ENCODE measurements at regions of chr7 and their contacts with region 1.

Region 1: GRCh38 chr7:134514663-134515062 is 12.7 kb upstream of the AKR1B10 start:
- DNase-seq: peak; percentile 68
- H3K4me3 ChIP-seq: no peak overlapping the region
- H3K27ac ChIP-seq: no peak overlapping the region
- H3K4me1 ChIP-seq: peaks cover 0 to 6% of the 10 kb centered on the region in 2 experiments; a peak in 1 of 4 replicates
- H3K27me3 ChIP-seq: 0 out of 2 replicates have a peak, but pooled peaks cover 16% of the 10 kb centered on the region
- CTCF ChIP-seq: peak; percentile 98
- EP300 ChIP-seq: no peak
- RAD21 ChIP-seq: peak; percentile 66

Region 2: GRCh38 chr7:134197345-134197744 is 317.3 kb before region 1 on chr7:
- CTCF ChIA-PET with region 1: no interaction called
- POLR2A ChIA-PET with region 1: no interaction called
- DNase-seq: no peak
- H3K4me3 ChIP-seq: no peak overlapping the region
- H3K27ac ChIP-seq: no peak overlapping the region
- H3K4me1 ChIP-seq: peaks cover 0 to 10% of the 10 kb centered on the region in 2 experiments; a peak in 2 of 4 replicates
- H3K27me3 ChIP-seq: no peaks in the 10 kb centered on the region
- CTCF ChIP-seq: no peak
- EP300 ChIP-seq: no peak
- RAD21 ChIP-seq: peak; percentile 13; the same call in 1 of the 2 replicates

Region 3: DNA sequence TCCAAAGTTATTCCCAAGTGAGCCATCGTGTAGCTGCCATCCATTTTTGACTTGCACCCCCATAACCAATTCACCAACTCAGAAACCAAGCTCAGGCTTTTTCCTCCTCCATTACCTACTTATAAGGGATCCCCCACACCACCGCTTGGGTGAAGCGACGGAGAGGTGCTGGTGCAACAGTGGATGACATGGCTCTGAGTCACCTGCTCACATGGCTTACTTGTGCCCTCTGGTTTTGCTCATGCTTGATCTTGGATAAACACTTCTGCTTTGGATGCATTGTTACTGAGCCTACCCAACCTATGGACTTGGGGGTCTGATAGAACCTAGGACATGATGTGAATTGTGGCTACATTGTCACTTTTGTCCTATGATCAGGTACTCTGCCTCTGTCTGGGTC is 43.8 kb before region 1 on chr7:
- CTCF ChIA-PET with region 1: interaction called, 12 read pairs
- POLR2A ChIA-PET with region 1: no interaction called
- DNase-seq: no peak
- H3K4me3 ChIP-seq: no peak overlapping the region
- H3K27ac ChIP-seq: no peak overlapping the region
- H3K4me1 ChIP-seq: no peaks in the 10 kb centered on the region
- H3K27me3 ChIP-seq: no peaks in the 10 kb centered on the region
- CTCF ChIP-seq: no peak
- EP300 ChIP-seq: no peak
- RAD21 ChIP-seq: no peak

Region 4: DNA sequence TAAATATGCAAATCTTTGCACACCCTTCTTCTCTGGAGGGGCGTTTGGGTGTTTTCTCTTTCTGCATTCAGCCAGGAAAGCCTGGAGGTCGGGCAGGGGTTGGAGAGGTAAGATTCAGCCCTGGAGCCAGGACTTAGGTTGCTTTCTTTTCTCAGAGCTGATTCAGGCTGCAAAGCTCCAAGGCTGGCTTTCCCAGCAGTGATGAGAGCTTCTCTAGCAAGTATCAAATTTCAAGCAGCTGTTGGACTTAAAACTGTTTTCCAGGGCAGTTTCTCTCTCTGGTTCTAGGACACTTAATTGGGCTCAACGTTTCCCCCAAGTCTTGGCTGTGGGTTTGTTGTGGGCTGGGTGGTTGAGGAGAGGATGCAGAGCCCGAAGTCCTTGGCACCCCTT is 13.3 kb after region 1 on chr7:
- CTCF ChIA-PET with region 1: interaction called, 54 read pairs
- POLR2A ChIA-PET with region 1: no interaction called
- DNase-seq: no peak
- H3K4me3 ChIP-seq: no peak overlapping the region
- H3K27ac ChIP-seq: no peak overlapping the region
- H3K4me1 ChIP-seq: peaks cover 0 to 5% of the 10 kb centered on the region in 2 experiments; a peak in 1 of 4 replicates
- H3K27me3 ChIP-seq: peaks cover 31% of the 10 kb centered on the region
- CTCF ChIP-seq: no peak
- EP300 ChIP-seq: no peak
- RAD21 ChIP-seq: no peak

Region 5: GRCh38 chr7:134553976-134554375 is 39.3 kb after region 1 on chr7:
- CTCF ChIA-PET with region 1: interaction called, 28 read pairs
- POLR2A ChIA-PET with region 1: no interaction called
- DNase-seq: no peak
- H3K4me3 ChIP-seq: no peak overlapping the region
- H3K27ac ChIP-seq: no peak overlapping the region
- H3K4me1 ChIP-seq: peaks cover 0 to 2% of the 10 kb centered on the region in 2 experiments; a peak in 1 of 4 replicates
- H3K27me3 ChIP-seq: peaks cover 67% of the 10 kb centered on the region; the same call in 1 of the 2 replicates
- CTCF ChIP-seq: no peak; the same call in 1 of the 2 replicates
- EP300 ChIP-seq: no peak
- RAD21 ChIP-seq: no peak

Region 6: DNA sequence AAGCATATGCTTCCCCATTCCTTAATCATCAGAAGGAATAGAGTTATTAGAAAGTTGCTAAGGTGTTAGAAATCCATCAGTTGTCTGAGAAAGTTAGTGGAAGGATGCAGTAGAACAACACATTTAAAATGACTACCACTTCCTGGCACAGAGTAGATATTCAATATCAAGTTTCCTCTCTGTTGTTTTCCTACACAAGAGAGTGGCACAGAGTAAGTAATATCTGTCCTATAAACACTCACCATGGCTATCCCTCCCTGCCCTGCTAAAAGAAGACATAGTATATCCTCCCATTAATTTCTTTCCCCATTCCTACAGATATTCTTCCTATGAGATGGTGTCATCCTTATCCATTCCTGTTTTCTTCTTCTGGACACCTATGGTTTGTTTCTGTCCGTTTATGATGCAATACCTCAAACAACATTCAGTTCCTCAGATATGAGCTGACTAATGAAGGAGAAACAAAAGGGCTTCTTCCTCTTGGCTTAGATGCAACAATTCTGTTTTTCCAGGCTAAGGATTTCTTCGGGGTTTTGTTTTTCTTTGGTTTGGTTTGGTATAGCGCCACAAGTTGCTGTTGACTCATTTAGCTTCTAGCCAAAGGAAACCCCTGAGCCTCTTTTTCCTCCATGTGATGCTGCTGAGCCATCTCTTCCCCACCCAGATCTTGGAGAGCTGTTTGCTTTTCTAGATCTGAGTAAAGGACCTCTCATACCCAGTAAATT is 99.1 kb after region 1 on chr7:
- CTCF ChIA-PET with region 1: interaction called, 79 read pairs
- POLR2A ChIA-PET with region 1: no interaction called
- DNase-seq: no peak
- H3K4me3 ChIP-seq: no peak overlapping the region; a peak in 1 of 4 replicates
- H3K27ac ChIP-seq: peak overlapping the region in 1 of 2 experiments; percentile 98; a peak in 2 of 4 replicates
- H3K4me1 ChIP-seq: peaks cover 0 to 21% of the 10 kb centered on the region in 2 experiments; a peak in 2 of 4 replicates
- H3K27me3 ChIP-seq: no peaks in the 10 kb centered on the region
- CTCF ChIP-seq: peak; percentile 26
- EP300 ChIP-seq: peak in 1 of 2 experiments; percentile 80; a peak in 2 of 4 replicates
- RAD21 ChIP-seq: no peak

Region 7: GRCh38 chr7:134701272-134701671 is 186.6 kb after region 1 on chr7:
- CTCF ChIA-PET with region 1: no interaction called
- POLR2A ChIA-PET with region 1: no interaction called
- DNase-seq: peak; percentile 48
- H3K4me3 ChIP-seq: no peak overlapping the region
- H3K27ac ChIP-seq: no peak overlapping the region
- H3K4me1 ChIP-seq: no peaks in the 10 kb centered on the region; a peak in 2 of 4 replicates
- H3K27me3 ChIP-seq: no peaks in the 10 kb centered on the region
- CTCF ChIP-seq: peak; percentile 62
- EP300 ChIP-seq: no peak
- RAD21 ChIP-seq: peak; percentile 66

Measured in SK-N-SH (cell line).